ENCODE measurements at regions of chr15 and their contacts with region 1.

Region 1: DNA sequence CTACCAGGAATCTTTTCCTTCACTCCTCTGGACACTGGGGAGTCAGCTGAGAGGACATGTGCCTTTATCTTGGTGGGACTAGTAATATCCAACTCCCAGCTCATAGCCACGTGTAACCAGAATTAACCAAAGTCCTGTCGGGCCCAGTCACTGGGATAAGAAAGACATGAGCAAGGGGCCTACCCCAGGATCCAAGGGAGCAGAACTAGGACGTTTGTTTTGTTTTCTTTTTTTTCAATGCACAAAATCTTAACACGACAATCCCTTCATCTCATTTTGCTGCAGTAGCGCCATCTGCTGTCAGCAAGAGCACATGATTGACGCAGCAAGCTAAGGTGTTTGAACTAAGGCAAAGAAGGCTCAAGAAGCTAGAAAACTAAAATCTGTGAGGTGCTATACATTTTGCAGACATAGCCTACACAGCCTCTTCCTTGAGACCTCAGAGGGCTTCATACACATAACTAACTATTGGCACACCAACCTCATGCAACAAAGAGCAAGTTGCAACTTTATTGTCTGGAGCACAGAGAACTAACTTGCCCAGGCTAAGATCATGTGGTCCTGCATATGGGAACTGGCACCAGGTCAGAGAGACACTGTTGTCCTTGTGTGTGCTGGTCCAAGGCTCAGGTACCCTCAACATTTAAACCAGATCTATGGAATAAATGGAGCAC is 43.6 kb downstream of the RLBP1 start:
- DNase-seq: peak; percentile 46 to 50
- H3K4me3 ChIP-seq: no peak overlapping the region
- H3K27ac ChIP-seq: no peak overlapping the region
- H3K4me1 ChIP-seq: no peaks in the 10 kb centered on the region
- H3K27me3 ChIP-seq: no peaks in the 10 kb centered on the region
- CTCF ChIP-seq: peak; percentile 88

Region 2: DNA sequence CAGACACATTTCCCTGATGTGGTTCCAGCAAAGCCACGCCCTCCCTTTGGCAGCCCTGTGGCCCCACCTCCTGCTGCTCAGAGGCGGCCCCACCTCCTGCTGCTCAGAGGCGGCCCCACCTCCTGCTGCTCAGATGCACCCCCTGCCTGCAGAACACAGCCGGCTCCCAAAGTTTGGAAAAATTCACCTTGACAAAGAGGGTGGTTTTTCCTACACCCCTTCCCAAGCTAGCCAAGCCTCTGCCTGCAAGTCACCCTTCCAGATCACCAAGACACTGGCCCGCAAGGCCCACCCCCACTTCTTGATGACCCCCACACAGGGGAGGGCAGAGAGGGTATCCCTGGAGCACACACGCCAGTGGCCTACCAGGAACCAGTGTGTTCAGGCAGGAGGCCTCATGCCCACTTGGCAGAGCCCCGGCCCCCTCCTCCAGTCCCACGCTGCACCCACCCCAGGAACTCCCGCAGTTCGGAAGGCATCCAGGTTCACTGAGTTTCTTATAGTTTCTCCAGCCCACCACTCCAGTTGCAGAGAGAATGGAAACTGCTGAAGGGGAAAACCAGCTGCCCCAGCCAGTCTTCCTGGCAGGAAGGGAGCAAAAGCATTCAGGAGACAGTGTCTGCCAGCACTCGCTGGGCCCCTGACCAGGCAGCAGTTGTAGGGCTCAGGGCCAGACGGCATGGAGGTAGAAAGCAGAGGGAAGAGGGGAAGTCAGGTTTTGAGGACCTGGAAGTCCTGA is 280.1 kb before region 1 on chr15:
- CTCF ChIA-PET with region 1: interaction called, 4 read pairs
- POLR2A ChIA-PET with region 1: no interaction called
- intact Hi-C with region 1: loop called (anchors 2 kb)
- DNase-seq: peak; percentile 62 to 84
- H3K4me3 ChIP-seq: no peak overlapping the region
- H3K27ac ChIP-seq: no peak overlapping the region
- H3K4me1 ChIP-seq: 0 out of 2 replicates have a peak, but pooled peaks cover 3% of the 10 kb centered on the region
- H3K27me3 ChIP-seq: peaks cover 19% of the 10 kb centered on the region; the same call in 1 of the 2 replicates
- CTCF ChIP-seq: peak; percentile 57

Region 3: GRCh38 chr15:88904624-88905327 is 273.0 kb before region 1 on chr15:
- CTCF ChIA-PET with region 1: no interaction called
- POLR2A ChIA-PET with region 1: no interaction called
- intact Hi-C with region 1: loop called (anchors 1 kb)
- DNase-seq: peak; percentile 36 to 75
- H3K4me3 ChIP-seq: no peak overlapping the region
- H3K27ac ChIP-seq: no peak overlapping the region
- H3K4me1 ChIP-seq: 0 out of 2 replicates have a peak, but pooled peaks cover 3% of the 10 kb centered on the region
- H3K27me3 ChIP-seq: no peaks in the 10 kb centered on the region
- CTCF ChIP-seq: peak; percentile 95

Measured in PC-9 (cell line).